ENCODE measurements at regions of chr2 and their contacts with region 1.

Region 1: DNA sequence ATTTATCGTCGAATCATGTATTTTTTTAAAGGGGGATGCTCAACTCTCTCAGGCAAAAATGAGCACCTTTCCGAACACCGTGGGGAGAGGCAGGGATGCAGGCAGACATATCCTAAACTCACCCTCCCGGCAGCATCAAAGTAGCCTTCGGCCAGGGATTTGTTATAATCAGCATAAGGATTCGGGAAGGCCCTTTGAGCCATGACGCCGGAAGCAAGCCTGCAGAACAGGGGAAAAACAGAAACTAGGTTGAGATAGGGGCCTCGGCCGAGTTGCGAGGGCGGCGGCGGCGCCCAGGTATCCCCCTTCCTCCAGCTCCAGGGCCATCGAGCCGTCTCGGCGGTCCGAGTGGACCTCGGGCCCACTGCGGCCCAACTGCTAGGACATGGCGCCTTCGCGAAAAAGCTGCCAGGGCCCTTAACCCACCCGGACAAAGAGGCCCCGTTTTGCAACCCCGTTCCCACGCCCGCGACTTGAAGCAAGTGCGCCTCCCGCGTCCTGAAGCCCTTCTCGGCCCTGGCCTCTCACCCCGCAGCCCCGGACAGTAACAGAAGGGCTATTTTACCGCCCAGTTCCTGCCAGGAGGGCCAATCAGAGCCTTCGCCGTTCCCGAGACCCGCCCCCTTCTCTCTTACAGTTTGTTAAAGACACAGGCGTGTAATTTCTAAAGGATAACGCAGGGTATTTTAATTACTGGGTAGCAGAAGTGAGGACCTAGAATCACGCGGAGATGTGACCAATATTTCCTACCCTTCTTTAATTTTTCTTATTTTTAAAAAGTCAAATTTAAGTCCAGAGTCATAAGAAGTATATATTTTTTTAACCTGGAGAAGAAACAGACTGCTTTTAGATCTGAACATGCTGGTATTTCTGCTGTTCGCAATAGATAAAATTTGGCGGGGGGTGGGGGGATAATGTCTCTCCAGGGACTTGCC is at the start of gene LANCL1:
- DNase-seq: peak; percentile 85
- H3K4me3 Mint-ChIP-seq: peak within 1 kb of the TSS; percentile 97
- H3K27ac Mint-ChIP-seq: peak within 1 kb of the TSS; percentile 85
- H3K4me1 Mint-ChIP-seq: no peaks in the 10 kb centered on the region
- H3K27me3 Mint-ChIP-seq: no peaks in the 10 kb centered on the region
- CTCF ChIP-seq: no peak
- total RNA-seq, gene LANCL1: 36.3 and 37.1 TPM in 2 replicates

Region 2: DNA sequence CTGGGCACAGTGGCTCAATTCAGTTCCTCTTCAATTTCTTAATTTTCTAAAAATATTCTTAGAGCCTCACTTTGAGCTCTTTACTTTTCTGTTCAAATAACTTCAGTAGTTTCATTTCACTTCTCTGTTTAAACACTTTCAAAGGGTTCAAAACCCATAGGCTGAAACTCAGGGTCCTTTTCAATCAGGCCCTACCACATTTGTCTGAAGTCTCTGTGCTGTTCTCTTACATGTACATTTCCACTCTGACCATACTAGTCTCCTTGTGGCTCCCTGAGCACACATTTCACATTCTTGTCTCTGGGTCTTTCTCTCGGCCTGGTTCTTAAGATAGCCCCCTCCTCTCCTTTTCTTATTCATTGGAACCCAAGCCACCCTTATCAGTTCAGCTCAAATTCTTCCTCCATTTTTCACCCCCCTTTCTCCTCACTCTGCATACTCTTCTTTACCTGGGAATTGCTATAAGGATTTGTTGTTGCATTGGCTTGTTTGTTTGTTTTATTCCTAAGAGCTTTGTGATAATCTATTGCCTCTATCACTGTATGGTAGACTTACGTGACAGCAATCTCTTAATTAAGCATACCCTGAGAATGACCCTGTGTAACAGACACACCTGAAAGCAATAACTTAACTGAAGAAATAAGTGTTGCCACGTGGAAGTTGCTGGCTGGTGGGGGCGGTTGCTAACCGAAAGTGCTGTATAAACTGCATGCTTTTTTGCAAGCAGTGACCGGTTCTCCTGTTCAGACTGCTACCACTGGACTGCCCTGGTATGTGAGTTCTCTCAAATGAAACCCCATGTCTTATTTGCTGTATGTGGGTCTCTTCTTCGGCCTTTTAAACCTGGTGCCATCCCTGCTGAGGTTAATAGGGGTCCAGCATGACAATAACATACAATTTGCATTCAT is 223.5 kb before region 1 on chr2:
- CTCF ChIA-PET with region 1: no interaction called
- intact Hi-C with region 1: loop called (anchors 1 kb)
- DNase-seq: no peak
- H3K4me3 Mint-ChIP-seq: no peak overlapping the region
- H3K27ac Mint-ChIP-seq: no peak overlapping the region
- H3K4me1 Mint-ChIP-seq: no peaks in the 10 kb centered on the region
- H3K27me3 Mint-ChIP-seq: no peaks in the 10 kb centered on the region
- CTCF ChIP-seq: no peak

Measured in Calu3 (cell line).